Activated CD4-positive, alpha-beta T cell treated with anti-CD3 and anti-CD28 coated beads, Interleukin-2, amount 10 ng/mL, durations not matched to agents 24 days and 14 days (primary cell): ENCODE measurements at regions of chr2 and their contacts with region 1.

Region 1: DNA sequence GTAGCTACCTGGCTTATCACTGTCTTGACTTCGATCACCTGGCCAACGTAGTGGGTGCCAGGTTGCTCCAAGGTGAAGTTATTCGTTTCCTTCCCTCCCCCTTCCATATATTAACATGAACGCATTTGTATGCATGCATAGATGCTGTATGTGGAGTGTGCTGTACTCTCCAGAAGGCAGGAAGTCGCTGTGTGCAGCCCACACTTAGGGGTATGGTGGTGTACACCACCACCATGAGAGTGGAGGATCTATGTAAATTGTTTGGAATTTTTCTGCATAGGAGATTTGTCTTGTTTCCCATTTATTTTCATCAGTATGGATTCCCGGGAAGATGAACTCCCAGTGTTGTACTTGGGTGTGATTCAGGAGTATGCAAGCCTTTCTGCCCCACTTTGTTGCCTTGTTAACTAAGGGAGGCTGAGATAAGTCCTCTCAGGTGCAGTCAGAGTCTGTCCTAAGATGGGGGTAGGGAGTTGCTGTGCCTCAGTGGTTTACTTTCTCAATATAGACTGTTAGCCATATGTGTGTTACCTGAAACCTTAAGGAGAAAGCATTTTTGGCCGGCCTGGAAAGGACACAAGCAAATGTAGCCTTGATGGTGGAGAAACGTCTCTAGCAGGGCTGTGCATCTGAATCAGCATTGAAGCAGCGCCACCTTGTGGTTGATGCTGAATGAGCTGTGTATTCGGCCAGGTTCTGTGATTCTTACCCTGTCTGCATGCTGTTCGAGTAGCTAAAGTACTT is 149.8 kb downstream of the TANC1 start:
- DNase-seq: peak; percentile 93
- H3K4me3 Mint-ChIP-seq: no peak overlapping the region
- H3K27ac Mint-ChIP-seq: no peak overlapping the region
- H3K4me1 Mint-ChIP-seq: peaks cover 3% of the 10 kb centered on the region
- H3K27me3 Mint-ChIP-seq: peaks cover 13% of the 10 kb centered on the region

Region 2: DNA sequence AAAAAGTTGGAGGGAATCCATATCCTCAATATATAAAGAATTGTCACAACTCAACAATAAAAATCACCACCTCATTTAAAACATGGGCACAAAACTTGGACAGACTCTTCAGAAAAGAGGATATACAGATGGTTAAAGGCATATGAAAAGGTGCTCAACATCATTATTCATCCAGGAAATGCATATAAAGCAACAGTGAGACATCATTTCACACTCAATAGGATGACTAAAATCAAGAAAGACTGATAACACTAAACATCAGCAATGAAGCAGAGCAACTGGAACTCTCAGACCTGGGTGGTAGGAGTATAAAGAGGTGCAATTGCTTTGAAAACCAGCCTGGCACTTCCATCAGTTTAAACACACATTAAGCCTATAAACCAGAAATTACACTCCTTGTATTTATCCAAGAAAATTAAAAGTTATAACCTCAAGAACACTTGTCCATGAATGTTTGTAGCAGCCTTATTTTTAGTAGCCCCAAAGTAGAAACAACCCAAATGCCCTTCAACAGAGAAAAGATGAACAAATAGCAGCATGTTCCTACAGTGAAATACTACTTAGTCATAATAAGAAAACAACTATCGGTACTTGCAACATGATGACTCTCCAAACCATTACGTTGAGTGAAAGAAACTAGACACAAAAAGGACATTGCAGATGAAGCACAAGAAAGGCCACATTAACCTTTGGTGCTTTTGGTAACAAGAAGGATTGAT is 229.0 kb before region 1 on chr2:
- intact Hi-C with region 1: loop called (anchors 1 kb)
- DNase-seq: no peak
- H3K4me3 Mint-ChIP-seq: no peak overlapping the region
- H3K27ac Mint-ChIP-seq: no peak overlapping the region
- H3K4me1 Mint-ChIP-seq: peaks cover 4% of the 10 kb centered on the region
- H3K27me3 Mint-ChIP-seq: peaks cover 4% of the 10 kb centered on the region

Region 3: DNA sequence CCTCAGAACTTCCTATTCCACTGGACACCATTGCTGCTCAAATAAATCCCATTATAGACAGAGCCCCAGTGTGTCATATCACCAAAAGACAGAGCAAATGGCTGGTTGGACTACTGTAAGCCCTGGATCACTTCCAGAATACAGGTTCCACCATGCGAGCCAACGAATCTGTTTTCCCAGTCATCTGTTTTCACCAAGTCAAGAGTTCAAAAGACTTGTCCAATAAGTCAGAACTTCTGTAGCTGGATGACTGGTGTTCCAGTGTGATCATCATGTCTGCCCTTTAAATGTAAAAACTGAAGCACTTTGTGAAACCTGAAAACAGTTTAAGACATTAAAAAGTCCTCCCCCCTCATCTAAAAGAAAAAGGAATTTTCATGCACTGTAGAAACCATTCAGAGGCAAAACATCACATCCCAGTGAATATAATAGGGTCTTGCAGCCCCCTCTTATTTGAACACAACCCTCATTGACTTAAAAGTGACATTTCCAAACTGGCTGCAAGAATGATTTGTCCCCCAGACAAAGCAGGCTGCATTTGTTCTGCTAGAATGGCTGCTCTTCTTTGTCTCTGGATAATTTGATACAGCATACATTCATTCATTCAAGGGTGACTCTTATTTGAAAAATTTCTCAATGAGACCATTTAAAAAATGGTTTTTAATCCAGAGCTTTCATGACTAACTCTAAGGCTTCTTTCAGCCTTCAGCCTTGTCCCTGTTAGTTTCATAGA is 214.4 kb before region 1 on chr2:
- intact Hi-C with region 1: loop called (anchors 1 kb)
- DNase-seq: no peak
- H3K4me3 Mint-ChIP-seq: no peak overlapping the region
- H3K27ac Mint-ChIP-seq: no peak overlapping the region
- H3K4me1 Mint-ChIP-seq: no peaks in the 10 kb centered on the region
- H3K27me3 Mint-ChIP-seq: peaks cover 4% of the 10 kb centered on the region

Region 4: GRCh38 chr2:159035790-159036411 is 82.4 kb before region 1 on chr2:
- intact Hi-C with region 1: loop called (anchors 1 kb)
- DNase-seq: peak; percentile 58
- H3K4me3 Mint-ChIP-seq: no peak overlapping the region
- H3K27ac Mint-ChIP-seq: no peak overlapping the region
- H3K4me1 Mint-ChIP-seq: no peaks in the 10 kb centered on the region
- H3K27me3 Mint-ChIP-seq: peaks cover 5% of the 10 kb centered on the region

Region 5: GRCh38 chr2:159968279-159968900 is 850.1 kb after region 1 on chr2:
- intact Hi-C with region 1: loop called (anchors 10 kb)
- DNase-seq: peak; percentile 63
- H3K4me3 Mint-ChIP-seq: no peak overlapping the region
- H3K27ac Mint-ChIP-seq: no peak overlapping the region
- H3K4me1 Mint-ChIP-seq: no peaks in the 10 kb centered on the region
- H3K27me3 Mint-ChIP-seq: no peaks in the 10 kb centered on the region